ENCODE measurements at regions of chr5 and their contacts with region 1.

Region 1: DNA sequence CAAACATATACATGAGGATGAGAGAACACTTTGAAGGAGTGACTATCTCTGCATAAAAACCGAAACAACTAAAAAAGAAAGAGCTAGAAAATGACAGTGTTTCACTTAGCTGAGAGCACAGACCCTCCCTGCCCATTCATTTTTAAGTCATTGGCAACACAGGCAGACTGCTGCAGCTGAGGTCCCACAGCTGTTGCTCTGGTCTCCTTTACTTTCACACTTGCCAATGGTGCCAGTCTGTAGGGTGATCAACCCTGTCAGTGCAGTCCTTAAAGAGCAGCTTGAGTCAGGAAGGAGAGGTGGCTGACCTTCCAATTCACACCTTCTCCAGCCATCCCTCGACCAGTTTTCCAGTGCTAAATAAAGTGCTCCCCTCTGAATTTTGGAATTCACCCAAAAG is 508.3 kb upstream of the CCNG1 start:
- DNase-seq: no peak
- H3K4me3 ChIP-seq: no peak overlapping the region
- H3K27ac ChIP-seq: no peak overlapping the region
- H3K4me1 ChIP-seq: no peaks in the 10 kb centered on the region
- H3K27me3 ChIP-seq: no peaks in the 10 kb centered on the region
- CTCF ChIP-seq: no peak
- EP300 ChIP-seq: no peak
- POLR2A ChIP-seq: no peak

Region 2: GRCh38 chr5:162248107-162248713 is 680.9 kb before region 1 on chr5:
- in situ Hi-C with region 1: no loop called
- intact Hi-C with region 1: loop called (anchors 5 kb)
- DNase-seq: no peak
- H3K4me3 ChIP-seq: no peak overlapping the region
- H3K27ac ChIP-seq: no peak overlapping the region
- H3K4me1 ChIP-seq: no peaks in the 10 kb centered on the region
- H3K27me3 ChIP-seq: no peaks in the 10 kb centered on the region
- CTCF ChIP-seq: peak in 2 of 5 experiments; percentile 17 to 29
- EP300 ChIP-seq: no peak
- POLR2A ChIP-seq: no peak

Region 3: DNA sequence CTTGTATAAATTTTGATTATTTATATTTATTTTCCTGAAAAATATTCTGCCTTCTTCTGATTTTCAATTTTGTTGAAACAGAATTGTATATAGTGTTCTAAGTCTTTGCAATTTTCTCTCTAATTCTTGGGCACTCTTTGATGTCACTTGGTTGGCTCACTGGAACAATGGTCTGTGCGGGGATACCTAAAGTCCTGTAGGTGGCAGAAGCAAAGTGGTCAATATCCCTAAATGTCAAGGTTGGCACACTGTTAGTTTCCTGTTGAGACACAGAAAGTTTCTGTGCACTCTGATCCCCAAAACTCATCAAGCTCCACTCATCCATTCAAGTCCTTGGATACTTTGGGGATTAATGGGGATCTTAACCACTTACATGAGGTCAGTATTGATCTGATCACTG is 27.5 kb after region 1 on chr5:
- in situ Hi-C with region 1: no loop called
- intact Hi-C with region 1: no loop called
- DNase-seq: no peak
- H3K4me3 ChIP-seq: no peak overlapping the region
- H3K27ac ChIP-seq: no peak overlapping the region
- H3K4me1 ChIP-seq: no peaks in the 10 kb centered on the region
- H3K27me3 ChIP-seq: no peaks in the 10 kb centered on the region
- CTCF ChIP-seq: no peak
- EP300 ChIP-seq: no peak
- POLR2A ChIP-seq: no peak

Region 4: GRCh38 chr5:163134061-163134460 is 205.0 kb after region 1 on chr5:
- in situ Hi-C with region 1: no loop called
- intact Hi-C with region 1: no loop called
- DNase-seq: no peak
- H3K4me3 ChIP-seq: no peak overlapping the region
- H3K27ac ChIP-seq: no peak overlapping the region
- H3K4me1 ChIP-seq: no peaks in the 10 kb centered on the region
- H3K27me3 ChIP-seq: no peaks in the 10 kb centered on the region
- CTCF ChIP-seq: no peak
- EP300 ChIP-seq: no peak
- POLR2A ChIP-seq: no peak

Measured in transverse colon (tissue), 4 donors.